Activated CD8-positive, alpha-beta memory T cell treated with anti-CD3 and anti-CD28 coated beads, Interleukin-2, amount 10 ng/mL, durations not matched to agents 7 days and 5 days (primary cell): ENCODE measurements at regions of chr10 and their contacts with region 1.

Region 1: GRCh38 chr10:71708301-71708703 is 11.3 kb downstream of the C10orf105 start:
- DNase-seq: peak; percentile 68
- ATAC-seq: peak; percentile 40
- H3K4me3 Mint-ChIP-seq: no peak overlapping the region
- H3K27ac Mint-ChIP-seq: no peak overlapping the region
- H3K4me1 Mint-ChIP-seq: peaks cover 25% of the 10 kb centered on the region
- H3K27me3 Mint-ChIP-seq: no peaks in the 10 kb centered on the region

Region 2: DNA sequence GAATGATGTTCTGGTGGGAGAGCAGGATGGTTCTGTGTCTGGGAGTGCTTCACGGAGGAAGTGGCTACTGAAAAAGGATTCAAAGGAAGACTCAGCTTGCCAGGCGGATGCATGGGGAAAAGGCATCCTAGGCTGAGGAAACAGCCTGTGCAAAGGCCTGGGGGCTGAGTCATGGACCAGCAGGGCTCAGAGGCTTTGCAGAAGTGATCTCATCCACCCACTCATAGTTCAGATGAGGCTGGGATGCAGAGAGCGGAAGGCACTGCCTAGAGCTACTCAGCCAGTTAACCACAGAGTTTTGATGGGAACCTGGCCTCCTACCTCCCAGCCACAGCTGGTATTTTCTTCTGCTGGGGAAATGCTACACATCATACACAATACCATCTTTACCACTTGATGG is 1051.8 kb before region 1 on chr10:
- CTCF ChIA-PET with region 1: no interaction called
- DNase-seq: peak; percentile 66
- ATAC-seq: peak; percentile 94
- H3K4me3 Mint-ChIP-seq: no peak overlapping the region
- H3K27ac Mint-ChIP-seq: peak overlapping the region; percentile 2
- H3K4me1 Mint-ChIP-seq: peaks cover 14% of the 10 kb centered on the region
- H3K27me3 Mint-ChIP-seq: peaks cover 11% of the 10 kb centered on the region

Region 3: DNA sequence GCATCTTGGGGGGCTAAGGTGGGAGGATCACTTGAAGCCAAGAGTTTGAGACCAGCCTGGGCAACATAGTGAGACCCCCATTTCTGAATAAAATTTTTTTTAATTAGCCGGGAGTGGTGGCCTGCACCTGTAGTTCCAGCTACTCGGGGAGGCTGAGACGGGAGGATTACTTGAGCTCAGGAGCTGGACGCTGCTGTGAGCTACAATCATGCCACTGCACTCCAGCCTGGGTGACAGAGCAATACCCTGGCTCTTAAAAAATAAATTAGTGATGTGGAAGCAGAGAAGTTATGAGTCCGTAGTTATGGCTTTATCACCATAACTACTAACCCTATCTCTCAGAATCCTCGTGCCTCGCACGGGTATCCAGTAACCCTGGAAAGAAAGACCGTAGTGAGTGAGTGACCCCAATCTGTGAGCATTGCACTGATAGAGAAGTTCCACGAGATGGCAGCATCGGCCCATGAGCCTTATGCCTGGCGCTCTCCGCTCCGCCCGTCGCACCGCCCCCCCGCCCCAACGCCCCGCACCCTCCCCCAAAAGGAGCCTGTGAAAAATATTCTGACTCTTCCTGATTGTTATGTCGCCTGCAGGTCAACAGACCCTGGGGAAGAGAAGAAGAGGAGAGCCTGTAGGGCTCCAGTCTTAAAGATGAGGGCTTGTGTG is 394.1 kb before region 1 on chr10:
- CTCF ChIA-PET with region 1: interaction called, 16 read pairs
- DNase-seq: peak; percentile 59
- ATAC-seq: peak; percentile 37
- H3K4me3 Mint-ChIP-seq: no peak overlapping the region
- H3K27ac Mint-ChIP-seq: no peak overlapping the region
- H3K4me1 Mint-ChIP-seq: peaks cover 19% of the 10 kb centered on the region
- H3K27me3 Mint-ChIP-seq: peaks cover 18% of the 10 kb centered on the region

Region 4: GRCh38 chr10:71383972-71384687 is 324.2 kb before region 1 on chr10:
- CTCF ChIA-PET with region 1: interaction called, 19 read pairs
- DNase-seq: peak; percentile 79
- ATAC-seq: peak; percentile 87
- H3K4me3 Mint-ChIP-seq: no peak overlapping the region
- H3K27ac Mint-ChIP-seq: no peak overlapping the region
- H3K4me1 Mint-ChIP-seq: no peaks in the 10 kb centered on the region
- H3K27me3 Mint-ChIP-seq: peaks cover 14% of the 10 kb centered on the region

Region 5: GRCh38 chr10:71696628-71697326 is 11.5 kb before region 1 on chr10:
- CTCF ChIA-PET with region 1: interaction called, 235 read pairs
- DNase-seq: peak; percentile 75
- ATAC-seq: peak; percentile 66
- H3K4me3 Mint-ChIP-seq: no peak overlapping the region
- H3K27ac Mint-ChIP-seq: no peak overlapping the region
- H3K4me1 Mint-ChIP-seq: peaks cover 51% of the 10 kb centered on the region
- H3K27me3 Mint-ChIP-seq: peaks cover 8% of the 10 kb centered on the region

Region 6: GRCh38 chr10:71740069-71740468 is 31.8 kb after region 1 on chr10:
- CTCF ChIA-PET with region 1: interaction called, 10 read pairs
- DNase-seq: no peak
- ATAC-seq: no peak
- H3K4me3 Mint-ChIP-seq: no peak overlapping the region
- H3K27ac Mint-ChIP-seq: peak overlapping the region; percentile 4
- H3K4me1 Mint-ChIP-seq: peaks cover 79% of the 10 kb centered on the region
- H3K27me3 Mint-ChIP-seq: no peaks in the 10 kb centered on the region

Region 7: GRCh38 chr10:71812016-71812912 is 104.0 kb after region 1 on chr10:
- CTCF ChIA-PET with region 1: interaction called, 26 read pairs
- DNase-seq: peak; percentile 82
- ATAC-seq: peak; percentile 96
- H3K4me3 Mint-ChIP-seq: no peak overlapping the region
- H3K27ac Mint-ChIP-seq: no peak overlapping the region
- H3K4me1 Mint-ChIP-seq: peaks cover 5% of the 10 kb centered on the region
- H3K27me3 Mint-ChIP-seq: no peaks in the 10 kb centered on the region

Region 8: DNA sequence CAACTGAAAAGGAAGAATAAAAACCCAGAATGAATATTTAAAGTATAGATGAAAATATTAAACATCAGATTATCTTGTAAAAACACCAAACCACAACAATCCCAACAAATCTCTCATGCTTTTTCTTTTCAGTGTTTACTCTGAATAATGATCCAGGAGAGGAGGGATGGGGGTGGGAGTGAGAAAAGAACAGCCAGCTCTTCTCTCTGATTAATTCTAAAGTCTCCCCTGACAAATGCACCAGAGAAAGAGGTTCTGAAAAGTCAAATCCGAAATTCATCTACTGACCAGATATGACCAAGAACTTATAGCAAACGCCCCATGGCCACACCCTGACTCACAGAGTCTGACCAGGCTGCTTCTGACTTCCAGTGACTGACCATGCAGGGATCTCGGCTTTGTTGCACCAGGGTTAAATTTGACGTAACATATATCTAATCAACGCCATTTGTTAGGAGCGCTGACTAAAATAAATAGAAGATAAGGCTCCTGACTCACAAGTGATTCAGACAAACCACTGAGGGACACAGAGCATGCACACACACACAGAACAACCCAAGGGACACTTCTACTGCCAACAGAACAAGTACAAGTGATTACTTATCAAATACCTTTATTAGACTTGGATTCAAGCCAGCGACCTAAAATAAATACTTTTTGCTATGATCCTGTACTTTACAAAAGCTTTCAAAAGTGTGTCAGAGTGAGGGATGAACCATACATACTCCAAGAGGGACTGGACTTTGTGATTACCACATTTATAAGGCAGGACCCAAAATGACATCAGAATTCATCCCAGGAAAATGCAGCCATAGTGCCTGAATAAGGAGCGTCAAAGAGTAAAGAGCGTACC is 389.4 kb after region 1 on chr10:
- CTCF ChIA-PET with region 1: no interaction called
- DNase-seq: no peak
- ATAC-seq: no peak
- H3K4me3 Mint-ChIP-seq: no peak overlapping the region
- H3K27ac Mint-ChIP-seq: no peak overlapping the region
- H3K4me1 Mint-ChIP-seq: peaks cover 32% of the 10 kb centered on the region
- H3K27me3 Mint-ChIP-seq: no peaks in the 10 kb centered on the region